ENCODE measurements at regions of chr3 and their contacts with region 1.

Region 1: GRCh38 chr3:63993653-63994079 is 29.6 kb downstream of the PSMD6 start:
- DNase-seq: peak; percentile 50
- ATAC-seq: peak; percentile 95
- H3K4me3 ChIP-seq: no peak overlapping the region
- H3K27ac ChIP-seq: no peak overlapping the region
- H3K4me1 ChIP-seq: peaks cover 19% of the 10 kb centered on the region
- H3K27me3 ChIP-seq: no peaks in the 10 kb centered on the region
- CTCF ChIP-seq: peak; percentile 82
- EP300 ChIP-seq: no peak
- POLR2A ChIP-seq: no peak
- RAD21 ChIP-seq: peak; percentile 87

Region 2: DNA sequence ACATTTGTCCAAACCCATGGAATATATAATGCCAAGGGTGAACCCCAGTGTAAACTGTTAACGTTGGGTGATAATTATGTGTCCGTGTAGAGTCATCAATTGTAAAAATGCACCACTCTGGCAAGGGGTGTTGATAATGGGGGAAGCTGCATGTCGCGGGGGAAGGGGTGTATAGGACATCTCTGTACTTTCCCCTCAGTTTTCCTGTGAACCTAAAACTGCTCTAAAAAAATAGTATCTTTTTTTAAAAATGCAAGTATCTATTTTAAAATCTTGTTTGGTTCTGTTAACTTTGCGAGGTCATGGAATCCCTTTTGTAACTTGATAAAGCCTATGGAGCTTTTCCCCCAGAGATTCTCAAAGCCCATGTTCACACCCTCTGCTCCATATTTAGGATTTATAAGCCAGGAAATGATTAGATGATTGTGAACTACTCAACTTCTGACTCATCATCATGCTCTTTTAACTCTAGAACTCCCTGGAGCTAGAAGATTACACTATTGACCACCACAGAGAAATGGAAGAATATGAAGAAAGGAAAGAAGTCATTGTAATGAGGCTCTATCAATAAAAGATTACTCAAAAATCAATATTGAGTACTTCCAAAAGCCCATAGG is 230.6 kb before region 1 on chr3:
- CTCF ChIA-PET with region 1: no interaction called
- POLR2A ChIA-PET with region 1: no interaction called
- in situ Hi-C with region 1: no loop called
- intact Hi-C with region 1: no loop called
- DNase-seq: no peak
- ATAC-seq: no peak
- H3K4me3 ChIP-seq: no peak overlapping the region
- H3K27ac ChIP-seq: no peak overlapping the region
- H3K4me1 ChIP-seq: no peaks in the 10 kb centered on the region
- H3K27me3 ChIP-seq: no peaks in the 10 kb centered on the region
- CTCF ChIP-seq: no peak
- EP300 ChIP-seq: no peak
- POLR2A ChIP-seq: no peak
- RAD21 ChIP-seq: no peak

Region 3: DNA sequence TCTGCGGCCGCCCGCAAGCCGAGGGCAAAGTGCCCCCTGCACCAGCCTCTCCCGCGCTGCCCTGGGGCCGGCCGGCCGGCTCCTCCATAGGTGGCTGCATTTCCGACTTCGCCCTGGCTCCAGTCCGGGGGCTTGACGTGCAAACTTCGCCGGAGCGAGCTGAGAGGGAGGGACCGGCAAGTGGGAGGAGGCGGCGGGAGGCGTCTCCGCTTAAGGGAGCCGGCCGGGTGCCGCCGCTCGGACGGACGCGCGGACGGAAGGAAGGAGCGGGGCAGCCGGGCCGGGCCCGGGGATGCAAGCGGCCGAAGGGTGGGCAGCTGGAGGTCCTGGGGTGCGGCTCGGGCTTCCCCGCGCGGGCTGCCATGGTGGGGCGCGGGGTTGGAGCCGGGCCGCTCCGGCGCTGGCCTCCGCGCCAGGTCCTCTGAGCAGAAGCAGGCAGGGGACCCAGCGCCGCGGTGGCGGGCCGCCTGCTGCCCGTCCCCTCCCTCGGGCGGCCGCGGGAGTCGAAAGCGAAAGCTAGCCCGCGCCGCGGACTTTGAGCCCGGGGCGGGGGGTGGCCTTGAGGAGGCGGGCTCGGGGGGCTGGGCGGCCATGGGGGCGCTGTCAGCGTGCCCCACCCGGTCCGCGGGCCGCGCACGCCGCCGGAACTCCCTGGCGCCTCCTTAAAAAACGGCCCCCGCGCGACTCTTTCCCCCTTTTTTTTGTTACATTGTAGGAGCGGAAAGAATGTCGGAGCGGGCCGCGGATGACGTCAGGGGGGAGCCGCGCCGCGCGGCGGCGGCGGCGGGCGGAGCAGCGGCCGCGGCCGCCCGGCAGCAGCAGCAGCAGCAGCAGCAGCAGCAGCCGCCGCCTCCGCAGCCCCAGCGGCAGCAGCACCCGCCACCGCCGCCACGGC is 81.5 kb before region 1 on chr3 and contains the start of gene SCAANT1:
- CTCF ChIA-PET with region 1: interaction called, 6 read pairs
- POLR2A ChIA-PET with region 1: no interaction called
- in situ Hi-C with region 1: loop called (anchors 5 kb)
- intact Hi-C with region 1: no loop called
- DNase-seq: peak; percentile 81
- ATAC-seq: peak; percentile 94
- H3K4me3 ChIP-seq: peak within 1 kb of the TSS; percentile 61 to 79 (median 61)
- H3K27ac ChIP-seq: peak within 1 kb of the TSS; percentile 98
- H3K4me1 ChIP-seq: peaks cover 36% of the 10 kb centered on the region
- H3K27me3 ChIP-seq: no peaks in the 10 kb centered on the region
- CTCF ChIP-seq: no peak; the same call in 1 of the 2 replicates
- EP300 ChIP-seq: peak in 1 of 2 experiments; percentile 19; a peak in 1 of 4 replicates
- POLR2A ChIP-seq: peak; percentile 61 to 79
- RAD21 ChIP-seq: peak; percentile 72
- total RNA-seq, gene SCAANT1: not detected in 2 replicates

Region 4: DNA sequence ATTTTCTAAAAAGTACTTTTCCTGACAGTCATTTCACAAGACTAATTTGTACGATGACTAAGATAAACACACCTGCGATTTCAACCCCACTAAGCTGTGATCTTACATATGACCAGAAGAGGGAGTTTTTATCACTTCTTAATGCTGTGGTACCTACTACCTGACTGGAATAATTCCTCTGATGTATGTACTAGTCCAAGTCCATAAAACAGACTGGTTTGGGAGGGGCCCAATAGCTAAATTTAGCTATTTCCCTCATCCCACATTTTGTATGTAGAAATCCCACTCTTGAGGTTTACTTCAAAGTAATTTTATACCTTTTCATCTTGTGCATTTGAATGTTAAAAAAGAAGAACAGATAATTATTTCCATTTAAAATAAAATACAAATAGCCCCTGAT is 31.8 kb before region 1 on chr3:
- CTCF ChIA-PET with region 1: interaction called, 35 read pairs
- POLR2A ChIA-PET with region 1: no interaction called
- in situ Hi-C with region 1: loop called (anchors 5 kb)
- intact Hi-C with region 1: loop called (anchors 1 kb)
- DNase-seq: peak; percentile 52
- ATAC-seq: peak; percentile 88
- H3K4me3 ChIP-seq: no peak overlapping the region
- H3K27ac ChIP-seq: no peak overlapping the region
- H3K4me1 ChIP-seq: peaks cover 11% of the 10 kb centered on the region
- H3K27me3 ChIP-seq: no peaks in the 10 kb centered on the region
- CTCF ChIP-seq: peak; percentile 69
- EP300 ChIP-seq: no peak
- POLR2A ChIP-seq: no peak
- RAD21 ChIP-seq: peak; percentile 38; the same call in 1 of the 2 replicates

Region 5: GRCh38 chr3:63967675-63968611 is 25.7 kb before region 1 on chr3:
- CTCF ChIA-PET with region 1: interaction called, 35 read pairs
- POLR2A ChIA-PET with region 1: no interaction called
- in situ Hi-C with region 1: loop called (anchors 5 kb)
- intact Hi-C with region 1: loop called (anchors 1 kb)
- DNase-seq: peak; percentile 88
- ATAC-seq: peak; percentile 96
- H3K4me3 ChIP-seq: peak overlapping the region; percentile 48 to 68 (median 55)
- H3K27ac ChIP-seq: peak overlapping the region; percentile 91
- H3K4me1 ChIP-seq: peaks cover 61% of the 10 kb centered on the region
- H3K27me3 ChIP-seq: no peaks in the 10 kb centered on the region
- CTCF ChIP-seq: 0 out of 2 replicates have a peak, but pooled peaks have one; percentile 6
- EP300 ChIP-seq: peak; percentile 26 to 67; a peak in 1 of 4 replicates
- POLR2A ChIP-seq: peak; percentile 62 to 66; a peak in 2 of 4 replicates
- RAD21 ChIP-seq: no peak